PC-3 (cell line): ENCODE measurements at regions of chr9 and their contacts with region 1.

Region 1: GRCh38 chr9:80699511-80699998 is 989.8 kb downstream of the TLE1 start:
- DNase-seq: peak; percentile 84
- ATAC-seq: peak; percentile 93
- H3K4me3 ChIP-seq: peak overlapping the region; percentile 46; the same call in 1 of the 2 replicates
- H3K27ac ChIP-seq: peak overlapping the region; percentile 79
- H3K4me1 ChIP-seq: peaks cover 22% of the 10 kb centered on the region
- H3K27me3 ChIP-seq: no peaks in the 10 kb centered on the region
- CTCF ChIP-seq: no peak

Region 2: GRCh38 chr9:80175286-80176150 is 524.0 kb before region 1 on chr9:
- CTCF ChIA-PET with region 1: no interaction called
- POLR2A ChIA-PET with region 1: no interaction called
- intact Hi-C with region 1: loop called (anchors 10 kb)
- DNase-seq: peak; percentile 63
- ATAC-seq: no peak
- H3K4me3 ChIP-seq: no peak overlapping the region
- H3K27ac ChIP-seq: no peak overlapping the region
- H3K4me1 ChIP-seq: no peaks in the 10 kb centered on the region
- H3K27me3 ChIP-seq: no peaks in the 10 kb centered on the region
- CTCF ChIP-seq: peak; percentile 69

Region 3: GRCh38 chr9:80867731-80868130 is 168.2 kb after region 1 on chr9:
- CTCF ChIA-PET with region 1: no interaction called
- POLR2A ChIA-PET with region 1: no interaction called
- intact Hi-C with region 1: loop called (anchors 5 kb)
- DNase-seq: peak; percentile 78
- ATAC-seq: peak; percentile 87
- H3K4me3 ChIP-seq: no peak overlapping the region
- H3K27ac ChIP-seq: peak overlapping the region; percentile 85
- H3K4me1 ChIP-seq: peaks cover 14% of the 10 kb centered on the region
- H3K27me3 ChIP-seq: no peaks in the 10 kb centered on the region
- CTCF ChIP-seq: no peak